WTC11 (cell line): ENCODE measurements at regions of chr2 and their contacts with region 1.

Region 1: GRCh38 chr2:231900486-231900942 is 25.7 kb downstream of the NPPC start:
- DNase-seq: peak; percentile 98
- ATAC-seq: peak; percentile 95
- H3K4me3 Mint-ChIP-seq: peak overlapping the region; percentile 34; the same call in 1 of the 2 replicates
- H3K27ac Mint-ChIP-seq: no peak overlapping the region
- H3K4me1 Mint-ChIP-seq: peaks cover 3% of the 10 kb centered on the region; the same call in 1 of the 2 replicates
- H3K27me3 Mint-ChIP-seq: no peaks in the 10 kb centered on the region
- CTCF ChIP-seq: peak; percentile 94

Region 2: GRCh38 chr2:231627384-231628120 is 273.0 kb before region 1 on chr2:
- CTCF ChIA-PET with region 1: no interaction called
- POLR2A ChIA-PET with region 1: no interaction called
- DNase-seq: no peak
- ATAC-seq: no peak; the same call in 1 of the 2 replicates
- H3K4me3 Mint-ChIP-seq: no peak overlapping the region
- H3K27ac Mint-ChIP-seq: peak overlapping the region; percentile 86
- H3K4me1 Mint-ChIP-seq: peaks cover 9% of the 10 kb centered on the region
- H3K27me3 Mint-ChIP-seq: no peaks in the 10 kb centered on the region
- CTCF ChIP-seq: no peak

Region 3: GRCh38 chr2:231910771-231911170 is 10.3 kb after region 1 on chr2:
- CTCF ChIA-PET with region 1: interaction called, 24 read pairs
- POLR2A ChIA-PET with region 1: no interaction called
- DNase-seq: no peak
- ATAC-seq: peak; percentile 19; the same call in 1 of the 2 replicates
- H3K4me3 Mint-ChIP-seq: no peak overlapping the region
- H3K27ac Mint-ChIP-seq: no peak overlapping the region
- H3K4me1 Mint-ChIP-seq: peaks cover 12% of the 10 kb centered on the region
- H3K27me3 Mint-ChIP-seq: no peaks in the 10 kb centered on the region
- CTCF ChIP-seq: no peak

Region 4: DNA sequence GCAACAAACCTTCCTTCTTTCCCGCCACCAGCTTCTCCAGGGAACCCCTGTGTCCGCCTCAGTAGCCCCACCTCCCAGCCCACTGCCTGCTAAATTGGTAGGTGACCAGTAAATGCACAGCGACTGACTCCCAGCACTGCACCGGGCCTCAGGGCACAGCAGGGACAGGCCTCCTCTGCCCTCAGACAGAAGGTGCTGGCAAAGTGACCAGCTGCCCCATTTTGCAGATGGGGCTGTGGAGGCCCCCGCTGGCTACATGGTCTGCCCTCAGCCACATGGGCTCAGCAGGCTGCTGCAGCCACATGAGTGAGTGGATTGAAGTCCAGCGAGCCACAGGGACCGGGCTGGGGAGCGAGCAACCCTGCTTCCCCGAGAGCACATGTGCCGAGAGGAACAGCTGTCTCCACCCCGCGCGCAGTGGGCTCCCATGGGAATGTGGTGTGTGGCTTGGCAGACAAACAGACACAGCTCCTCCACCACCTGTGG is 33.4 kb after region 1 on chr2:
- CTCF ChIA-PET with region 1: interaction called, 19 read pairs
- POLR2A ChIA-PET with region 1: no interaction called
- DNase-seq: no peak
- ATAC-seq: no peak
- H3K4me3 Mint-ChIP-seq: no peak overlapping the region
- H3K27ac Mint-ChIP-seq: no peak overlapping the region
- H3K4me1 Mint-ChIP-seq: no peaks in the 10 kb centered on the region
- H3K27me3 Mint-ChIP-seq: peaks cover 9% of the 10 kb centered on the region
- CTCF ChIP-seq: no peak

Region 5: GRCh38 chr2:232230557-232230956 is 330.0 kb after region 1 on chr2:
- CTCF ChIA-PET with region 1: interaction called, 12 read pairs
- POLR2A ChIA-PET with region 1: no interaction called
- DNase-seq: peak; percentile 76
- ATAC-seq: peak; percentile 85
- H3K4me3 Mint-ChIP-seq: no peak overlapping the region
- H3K27ac Mint-ChIP-seq: 0 out of 2 replicates have a peak overlapping the region, but pooled peaks have one; percentile 2
- H3K4me1 Mint-ChIP-seq: peaks cover 19% of the 10 kb centered on the region
- H3K27me3 Mint-ChIP-seq: no peaks in the 10 kb centered on the region
- CTCF ChIP-seq: no peak

Region 6: DNA sequence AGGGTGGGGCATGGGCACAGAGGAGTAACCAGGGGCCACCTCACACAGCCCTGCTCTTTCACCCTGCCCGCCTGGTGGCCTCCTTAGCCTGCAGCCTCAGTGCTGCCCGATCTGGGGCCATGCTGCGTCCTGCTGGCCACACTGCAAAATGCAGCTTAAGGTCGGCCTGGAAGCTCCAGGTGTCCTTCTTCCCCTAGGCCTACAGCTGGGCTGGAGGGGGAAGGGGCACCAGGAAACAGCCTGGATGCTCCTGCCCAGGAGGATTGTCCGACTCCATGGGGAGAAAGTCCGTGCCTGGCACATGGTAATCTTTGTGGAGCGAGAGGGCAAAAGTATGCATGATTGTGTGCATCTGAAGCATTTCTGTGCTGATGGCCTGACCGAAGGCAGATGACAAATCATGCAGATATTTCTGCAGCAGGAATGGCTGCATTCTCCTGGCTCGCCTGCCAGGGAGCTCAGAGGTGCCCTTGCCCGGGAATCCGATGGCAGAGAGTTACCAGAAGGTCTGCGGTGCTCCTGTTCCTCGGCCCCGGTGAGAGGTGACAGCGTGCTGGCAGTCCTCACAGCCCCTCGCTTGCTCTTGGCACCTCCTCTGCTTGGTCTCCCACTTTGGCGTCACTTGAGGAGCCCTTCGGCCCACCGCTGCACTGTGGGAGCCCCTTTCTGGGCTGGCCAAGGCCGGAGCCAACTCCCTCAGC is 465.3 kb after region 1 on chr2:
- CTCF ChIA-PET with region 1: interaction called, 31 read pairs
- POLR2A ChIA-PET with region 1: no interaction called
- DNase-seq: peak; percentile 71
- ATAC-seq: peak; percentile 75
- H3K4me3 Mint-ChIP-seq: no peak overlapping the region
- H3K27ac Mint-ChIP-seq: no peak overlapping the region
- H3K4me1 Mint-ChIP-seq: peaks cover 16% of the 10 kb centered on the region
- H3K27me3 Mint-ChIP-seq: no peaks in the 10 kb centered on the region; the same call in 1 of the 2 replicates
- CTCF ChIP-seq: peak; percentile 40